HCT116 (cell line): ENCODE measurements at regions of chr17 and their contacts with region 1.

Region 1: GRCh38 chr17:81471804-81472456 is 40.7 kb downstream of the ACTG1 start:
- DNase-seq: peak; percentile 99
- ATAC-seq: peak; percentile 94
- H3K4me3 ChIP-seq: peak overlapping the region; percentile 51 to 58
- H3K27ac ChIP-seq: peak overlapping the region; percentile 59
- H3K4me1 ChIP-seq: peaks cover 6 to 30% of the 10 kb centered on the region in 2 experiments; a peak in 3 of 4 replicates
- H3K27me3 ChIP-seq: no peaks in the 10 kb centered on the region
- CTCF ChIP-seq: peak; percentile 74 to 90 (median 88)
- POLR2A ChIP-seq: peak; percentile 98
- RAD21 ChIP-seq: peak; percentile 99

Region 2: DNA sequence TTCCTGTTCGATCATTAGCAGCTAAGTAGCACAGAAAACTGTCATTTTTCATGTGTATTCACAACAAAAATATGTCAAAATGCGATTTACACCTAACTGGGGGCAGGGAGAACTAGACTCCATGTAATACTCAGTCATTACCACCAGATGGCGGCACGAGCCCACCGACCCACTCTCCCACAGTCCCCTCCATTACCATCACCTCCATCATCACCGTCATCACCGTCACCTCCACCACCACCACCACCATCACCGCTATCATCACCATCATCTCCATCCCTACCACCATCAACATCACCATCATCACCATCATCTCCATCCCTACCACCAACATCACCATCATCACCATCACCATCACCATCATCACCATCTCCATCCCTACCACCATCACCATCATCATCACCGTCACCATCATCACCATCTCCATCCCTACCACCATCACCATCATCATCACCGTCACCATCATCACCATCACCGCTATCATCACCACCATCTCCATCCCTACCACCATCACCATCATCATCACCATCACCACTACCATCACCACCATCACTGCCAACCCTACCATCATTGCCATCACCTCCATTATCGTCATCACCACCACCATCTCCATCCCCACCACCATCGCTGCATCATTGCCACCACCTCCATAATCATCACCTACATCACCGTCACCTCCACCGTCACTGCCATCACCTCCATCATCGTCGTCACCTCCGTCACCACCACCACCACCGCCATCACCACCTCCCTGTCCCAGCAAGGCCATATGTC is 218.4 kb before region 1 on chr17:
- CTCF ChIA-PET with region 1: interaction called, 17 read pairs
- POLR2A ChIA-PET with region 1: interaction called, 5 read pairs
- RAD21 ChIA-PET with region 1: interaction called, 3 to 4 read pairs
- intact Hi-C with region 1: loop called (anchors 1 kb)
- DNase-seq: no peak
- ATAC-seq: peak; percentile 66
- H3K4me3 ChIP-seq: no peak overlapping the region
- H3K27ac ChIP-seq: no peak overlapping the region
- H3K4me1 ChIP-seq: no peaks in the 10 kb centered on the region
- H3K27me3 ChIP-seq: no peaks in the 10 kb centered on the region
- CTCF ChIP-seq: peak; percentile 69 to 95 (median 74)
- POLR2A ChIP-seq: no peak
- RAD21 ChIP-seq: peak; percentile 93

Region 3: GRCh38 chr17:81337476-81337879 is 134.5 kb before region 1 on chr17:
- CTCF ChIA-PET with region 1: no interaction called
- POLR2A ChIA-PET with region 1: no interaction called
- RAD21 ChIA-PET with region 1: no interaction called
- intact Hi-C with region 1: no loop called
- DNase-seq: no peak
- ATAC-seq: peak; percentile 74
- H3K4me3 ChIP-seq: no peak overlapping the region
- H3K27ac ChIP-seq: no peak overlapping the region; the same call in 1 of the 2 replicates
- H3K4me1 ChIP-seq: peaks cover 53 to 67% of the 10 kb centered on the region in 2 experiments
- H3K27me3 ChIP-seq: no peaks in the 10 kb centered on the region
- CTCF ChIP-seq: no peak
- POLR2A ChIP-seq: no peak
- RAD21 ChIP-seq: no peak

Region 4: GRCh38 chr17:81371910-81372760 is 99.8 kb before region 1 on chr17:
- CTCF ChIA-PET with region 1: no interaction called
- POLR2A ChIA-PET with region 1: interaction called, 3 read pairs
- RAD21 ChIA-PET with region 1: no interaction called
- intact Hi-C with region 1: loop called (anchors 1 kb)
- DNase-seq: peak; percentile 35
- ATAC-seq: peak; percentile 92
- H3K4me3 ChIP-seq: no peak overlapping the region
- H3K27ac ChIP-seq: no peak overlapping the region; the same call in 1 of the 2 replicates
- H3K4me1 ChIP-seq: peaks cover 0 to 11% of the 10 kb centered on the region in 2 experiments; a peak in 1 of 4 replicates
- H3K27me3 ChIP-seq: peaks cover 1% of the 10 kb centered on the region; the same call in 1 of the 2 replicates
- CTCF ChIP-seq: peak in 2 of 3 experiments; percentile 67 to 75; a peak in 4 of 6 replicates
- POLR2A ChIP-seq: no peak
- RAD21 ChIP-seq: peak; percentile 80

Region 5: DNA sequence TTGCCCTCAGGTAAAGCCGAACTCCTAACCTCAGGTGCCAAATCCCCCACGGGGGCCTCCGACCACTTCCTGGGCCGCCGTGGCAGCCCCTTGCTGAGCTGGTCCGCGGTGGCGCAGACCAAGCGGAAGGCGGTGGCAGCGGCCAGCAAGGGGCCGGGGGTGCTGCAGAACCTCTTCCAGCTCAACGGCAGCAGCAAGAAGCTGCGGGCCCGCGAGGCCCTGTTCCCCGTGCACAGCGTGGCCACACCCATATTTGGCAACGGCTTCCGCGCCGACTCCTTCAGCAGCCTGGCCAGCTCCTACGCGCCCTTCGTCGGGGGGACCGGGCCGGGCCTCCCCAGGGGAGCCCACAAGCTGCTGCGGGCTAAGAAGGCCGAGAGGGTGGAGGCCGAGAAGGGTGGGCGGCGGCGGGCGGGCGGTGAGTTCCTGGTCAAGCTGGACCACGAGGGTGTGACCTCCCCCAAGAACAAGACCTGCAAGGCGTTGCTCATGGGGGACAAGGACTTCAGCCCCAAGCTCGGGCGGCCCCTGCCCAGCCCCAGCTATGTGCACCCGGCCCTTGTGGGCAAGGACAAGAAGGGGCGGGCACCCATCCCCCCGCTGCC is 11.0 kb before region 1 on chr17:
- CTCF ChIA-PET with region 1: interaction called, 3 read pairs
- POLR2A ChIA-PET with region 1: interaction called, 12 read pairs
- RAD21 ChIA-PET with region 1: no interaction called
- intact Hi-C with region 1: no loop called
- DNase-seq: no peak
- ATAC-seq: no peak
- H3K4me3 ChIP-seq: no peak overlapping the region
- H3K27ac ChIP-seq: no peak overlapping the region
- H3K4me1 ChIP-seq: no peaks in the 10 kb centered on the region
- H3K27me3 ChIP-seq: no peaks in the 10 kb centered on the region
- CTCF ChIP-seq: no peak
- POLR2A ChIP-seq: no peak
- RAD21 ChIP-seq: no peak

Region 6: GRCh38 chr17:81508639-81509206 is 36.8 kb after region 1 on chr17:
- CTCF ChIA-PET with region 1: no interaction called
- POLR2A ChIA-PET with region 1: no interaction called
- RAD21 ChIA-PET with region 1: no interaction called
- intact Hi-C with region 1: no loop called
- DNase-seq: peak; percentile 84
- ATAC-seq: peak; percentile 23
- H3K4me3 ChIP-seq: no peak overlapping the region
- H3K27ac ChIP-seq: peak overlapping the region; percentile 15; the same call in 1 of the 2 replicates
- H3K4me1 ChIP-seq: peaks cover 11 to 42% of the 10 kb centered on the region in 2 experiments; a peak in 3 of 4 replicates
- H3K27me3 ChIP-seq: no peaks in the 10 kb centered on the region
- CTCF ChIP-seq: no peak
- POLR2A ChIP-seq: no peak
- RAD21 ChIP-seq: no peak

Region 7: GRCh38 chr17:81527591-81528383 is 55.9 kb after region 1 on chr17 and contains the start of gene FSCN2:
- CTCF ChIA-PET with region 1: no interaction called
- POLR2A ChIA-PET with region 1: no interaction called
- RAD21 ChIA-PET with region 1: no interaction called
- intact Hi-C with region 1: no loop called
- DNase-seq: no peak
- ATAC-seq: peak; percentile 83
- H3K4me3 ChIP-seq: peak within 1 kb of the TSS; percentile 40 to 58
- H3K27ac ChIP-seq: peak within 1 kb of the TSS; percentile 72
- H3K4me1 ChIP-seq: peaks cover 12 to 41% of the 10 kb centered on the region in 2 experiments
- H3K27me3 ChIP-seq: no peaks in the 10 kb centered on the region
- CTCF ChIP-seq: peak in 2 of 3 experiments; percentile 39 to 60; a peak in 4 of 6 replicates
- POLR2A ChIP-seq: no peak
- RAD21 ChIP-seq: no peak
- total RNA-seq, gene FSCN2: 10.1 TPM